ENCODE measurements at regions of chrX and their contacts with region 1.

Region 1: GRCh38 chrX:123422877-123423276 is 238.8 kb downstream of the GRIA3 start:
- DNase-seq: peak; percentile 6 to 24 (median 8)
- ATAC-seq: peak; percentile 82
- H3K4me3 ChIP-seq: no peak overlapping the region
- H3K27ac ChIP-seq: no peak overlapping the region
- H3K4me1 ChIP-seq: no peaks in the 10 kb centered on the region
- H3K27me3 ChIP-seq: no peaks in the 10 kb centered on the region
- CTCF ChIP-seq: peak; percentile 53 to 68 (median 59); a peak in 5 of 6 replicates
- EP300 ChIP-seq: no peak
- POLR2A ChIP-seq: no peak
- RAD21 ChIP-seq: peak; percentile 50 to 67

Region 2: DNA sequence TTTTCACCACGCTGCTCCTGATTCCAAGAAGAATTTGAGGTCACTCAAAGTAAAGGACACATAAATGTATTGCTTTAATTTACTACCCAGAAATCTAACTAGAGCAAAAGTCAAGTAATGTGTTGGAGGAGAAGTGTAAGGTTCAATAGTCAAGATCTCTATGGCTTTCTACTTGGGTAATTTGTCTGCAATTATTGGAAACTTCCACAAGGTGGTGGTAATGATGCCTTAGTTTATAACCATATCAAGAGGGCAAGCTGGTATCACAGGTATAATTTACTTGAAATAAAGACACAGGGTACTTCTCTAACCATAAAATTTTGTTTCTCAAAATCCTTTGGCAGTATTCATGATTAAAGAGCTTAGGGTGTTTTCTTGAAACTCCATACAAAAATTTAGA is 249.0 kb before region 1 on chrX:
- CTCF ChIA-PET with region 1: interaction called, 9 read pairs
- POLR2A ChIA-PET with region 1: interaction called, 3 read pairs
- in situ Hi-C with region 1: no loop called
- intact Hi-C with region 1: loop called (anchors 5 kb)
- DNase-seq: peak; percentile 8 to 26 (median 23)
- ATAC-seq: peak; percentile 79
- H3K4me3 ChIP-seq: no peak overlapping the region
- H3K27ac ChIP-seq: no peak overlapping the region
- H3K4me1 ChIP-seq: no peaks in the 10 kb centered on the region
- H3K27me3 ChIP-seq: no peaks in the 10 kb centered on the region
- CTCF ChIP-seq: peak; percentile 22 to 48 (median 23); a peak in 3 of 6 replicates
- EP300 ChIP-seq: no peak
- POLR2A ChIP-seq: no peak
- RAD21 ChIP-seq: peak; percentile 14 to 55; a peak in 2 of 4 replicates

Region 3: DNA sequence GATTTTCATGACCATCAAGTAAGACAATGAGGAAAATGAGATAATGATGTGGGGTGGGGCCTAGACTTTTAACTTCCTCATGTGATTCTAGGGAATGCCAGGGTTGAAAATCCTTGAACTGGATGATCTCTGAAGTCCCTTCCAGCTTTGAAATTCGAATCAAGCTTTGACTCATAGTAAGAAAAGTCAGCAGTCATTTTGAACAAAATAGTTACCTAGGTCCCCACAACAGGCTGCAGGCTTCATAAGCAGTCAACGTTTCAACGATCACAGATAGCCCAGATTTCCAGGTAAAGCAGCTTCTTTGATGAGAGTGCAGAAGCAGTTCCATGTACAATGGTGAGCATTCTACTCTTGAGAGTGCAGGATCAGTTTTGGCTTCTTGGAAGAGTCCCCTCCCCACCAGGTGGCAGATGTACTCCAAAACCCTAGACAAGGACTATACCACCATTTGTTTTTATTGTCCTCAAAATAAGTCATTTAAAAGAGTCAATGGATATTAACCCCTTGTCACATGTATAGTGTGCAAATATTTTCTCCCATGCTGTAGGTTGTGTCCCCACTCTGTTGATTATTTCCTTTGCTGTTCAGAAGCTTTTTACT is 145.0 kb before region 1 on chrX:
- CTCF ChIA-PET with region 1: no interaction called
- POLR2A ChIA-PET with region 1: no interaction called
- in situ Hi-C with region 1: no loop called
- intact Hi-C with region 1: loop called (anchors 5 kb)
- DNase-seq: peak in 1 of 4 experiments; percentile 2
- ATAC-seq: no peak
- H3K4me3 ChIP-seq: no peak overlapping the region
- H3K27ac ChIP-seq: no peak overlapping the region
- H3K4me1 ChIP-seq: no peaks in the 10 kb centered on the region
- H3K27me3 ChIP-seq: no peaks in the 10 kb centered on the region
- CTCF ChIP-seq: peak in 1 of 3 experiments; percentile 20; a peak in 1 of 6 replicates
- EP300 ChIP-seq: no peak
- POLR2A ChIP-seq: no peak
- RAD21 ChIP-seq: peak in 1 of 2 experiments; percentile 10; a peak in 1 of 4 replicates

Region 4: GRCh38 chrX:123340682-123341081 is 82.2 kb before region 1 on chrX:
- CTCF ChIA-PET with region 1: no interaction called
- POLR2A ChIA-PET with region 1: no interaction called
- in situ Hi-C with region 1: no loop called
- intact Hi-C with region 1: no loop called
- DNase-seq: no peak
- ATAC-seq: no peak
- H3K4me3 ChIP-seq: no peak overlapping the region
- H3K27ac ChIP-seq: no peak overlapping the region
- H3K4me1 ChIP-seq: no peaks in the 10 kb centered on the region
- H3K27me3 ChIP-seq: no peaks in the 10 kb centered on the region
- CTCF ChIP-seq: no peak
- EP300 ChIP-seq: no peak
- POLR2A ChIP-seq: no peak
- RAD21 ChIP-seq: no peak

Region 5: GRCh38 chrX:123581586-123581985 is 158.7 kb after region 1 on chrX:
- CTCF ChIA-PET with region 1: no interaction called
- POLR2A ChIA-PET with region 1: no interaction called
- in situ Hi-C with region 1: no loop called
- intact Hi-C with region 1: no loop called
- DNase-seq: no peak
- ATAC-seq: no peak
- H3K4me3 ChIP-seq: no peak overlapping the region
- H3K27ac ChIP-seq: no peak overlapping the region
- H3K4me1 ChIP-seq: no peaks in the 10 kb centered on the region
- H3K27me3 ChIP-seq: no peaks in the 10 kb centered on the region
- CTCF ChIP-seq: no peak
- EP300 ChIP-seq: no peak
- POLR2A ChIP-seq: no peak
- RAD21 ChIP-seq: no peak